Heart right ventricle (tissue), 16 donors: ENCODE measurements at regions of chr6 and their contacts with region 1.

Region 1: DNA sequence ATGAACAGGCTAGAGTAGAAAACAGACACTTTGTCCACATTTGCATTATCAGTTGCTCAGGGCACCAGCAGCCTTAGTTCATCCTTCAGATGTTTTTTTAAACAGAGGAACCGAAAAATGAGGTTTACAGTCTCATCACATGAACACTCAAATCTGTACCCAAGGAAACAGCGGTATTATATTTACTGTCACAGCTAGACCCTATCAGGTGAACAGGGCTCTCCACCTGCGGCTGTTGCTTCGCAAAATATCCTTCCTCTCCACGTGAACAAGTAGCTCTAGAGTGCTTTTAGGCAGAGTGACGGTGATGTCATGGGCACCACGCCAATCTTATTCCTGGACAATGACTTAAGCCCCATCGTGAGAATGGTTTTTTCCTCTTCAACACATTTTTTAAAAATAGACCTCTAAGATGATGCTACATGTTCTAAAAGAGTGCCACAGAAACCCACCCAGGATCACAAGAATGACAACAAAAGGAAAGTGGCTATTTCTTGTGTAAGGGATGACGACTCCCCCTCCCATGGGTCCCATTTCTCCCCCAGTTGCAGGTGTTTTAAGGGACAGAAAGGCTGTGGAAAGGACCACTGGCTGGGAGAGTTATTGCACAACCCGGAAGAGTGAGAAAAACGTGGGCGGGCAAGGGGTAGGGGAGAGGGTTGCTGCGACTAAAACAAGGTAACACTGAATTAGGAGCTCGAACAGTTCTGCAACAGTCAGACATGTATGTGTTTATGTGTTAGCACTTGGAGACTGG is 77.7 kb downstream of the EFHC1 start:
- DNase-seq: peak in 1 of 2 donors; percentile 75
- ATAC-seq: peak in 6 of 8 donors; percentile 20 to 55 (median 36)
- H3K4me3 ChIP-seq: no peak overlapping the region
- H3K27ac ChIP-seq: peak overlapping the region in 9 of 10 donors; percentile 76 to 90 (median 86)
- H3K4me1 ChIP-seq: peaks cover 13 to 63% (median 42%) of the 10 kb centered on the region in 9 donors
- H3K27me3 ChIP-seq: no peaks in the 10 kb centered on the region
- CTCF ChIP-seq: no peak

Region 2: DNA sequence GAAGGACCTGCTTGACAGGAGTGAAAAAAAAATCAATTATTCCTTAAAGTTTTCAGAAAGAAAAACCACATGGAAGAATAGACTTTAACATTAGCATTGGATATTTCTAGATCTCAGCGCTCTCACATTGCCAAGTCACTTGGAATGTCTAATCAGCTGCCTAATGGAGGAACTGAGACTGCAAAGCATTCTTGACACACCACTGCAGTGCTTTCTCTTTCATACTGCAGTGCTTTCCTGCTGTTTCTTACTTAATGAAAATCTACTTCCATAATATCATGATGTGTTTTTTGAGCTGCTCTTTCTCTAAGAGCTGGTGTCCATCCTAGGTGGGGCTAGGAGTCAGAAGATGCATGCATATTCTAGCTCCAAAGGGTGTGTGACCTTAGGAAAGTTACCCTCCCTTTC is 192.8 kb before region 1 on chr6:
- intact Hi-C with region 1: no loop called
- DNase-seq: no peak
- ATAC-seq: peak in 7 of 8 donors; percentile 63 to 79 (median 73)
- H3K4me3 ChIP-seq: no peak overlapping the region
- H3K27ac ChIP-seq: peak overlapping the region in 8 of 10 donors; percentile 11 to 84 (median 38)
- H3K4me1 ChIP-seq: peaks cover 0 to 45% (median 28%) of the 10 kb centered on the region in 9 donors
- H3K27me3 ChIP-seq: no peaks in the 10 kb centered on the region
- CTCF ChIP-seq: no peak

Region 3: GRCh38 chr6:52551401-52552277 is 53.8 kb after region 1 on chr6:
- intact Hi-C with region 1: loop called in 1 of 10 experiments (anchors 2 kb)
- DNase-seq: peak; percentile 54 to 69
- ATAC-seq: peak; percentile 83 to 93 (median 90)
- H3K4me3 ChIP-seq: peak overlapping the region in 5 of 10 donors; percentile 4 to 14 (median 6)
- H3K27ac ChIP-seq: peak overlapping the region in 9 of 10 donors; percentile 37 to 81 (median 56)
- H3K4me1 ChIP-seq: peaks cover 24 to 78% (median 66%) of the 10 kb centered on the region in 9 donors
- H3K27me3 ChIP-seq: no peaks in the 10 kb centered on the region
- CTCF ChIP-seq: no peak